ENCODE measurements at regions of chrX and their contacts with region 1.

Region 1: DNA sequence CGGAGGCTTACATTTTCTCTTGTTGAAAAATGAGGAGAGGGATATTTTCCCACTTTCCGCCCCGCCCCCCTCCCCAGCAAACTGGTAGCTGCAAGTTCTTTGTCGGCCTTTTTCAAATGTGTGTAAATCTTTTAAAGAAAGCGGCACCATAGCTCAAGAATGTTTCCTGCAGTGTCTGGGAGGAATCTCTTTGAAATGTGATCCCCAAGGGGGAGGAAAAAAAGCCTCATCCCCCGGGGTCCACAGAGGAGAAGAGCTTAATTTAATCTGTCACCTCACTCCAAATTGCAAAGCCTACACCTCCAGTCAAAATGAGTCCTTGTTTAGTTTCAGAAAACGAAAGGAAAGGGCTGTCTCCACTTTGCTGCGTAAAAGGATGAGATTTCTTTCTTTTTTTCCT is 34.8 kb downstream of the ASMT start:
- DNase-seq: no peak
- H3K4me3 ChIP-seq: no peak overlapping the region
- H3K27ac ChIP-seq: no peak overlapping the region
- H3K4me1 ChIP-seq: peaks cover 9% of the 10 kb centered on the region
- CTCF ChIP-seq: no peak

Region 2: DNA sequence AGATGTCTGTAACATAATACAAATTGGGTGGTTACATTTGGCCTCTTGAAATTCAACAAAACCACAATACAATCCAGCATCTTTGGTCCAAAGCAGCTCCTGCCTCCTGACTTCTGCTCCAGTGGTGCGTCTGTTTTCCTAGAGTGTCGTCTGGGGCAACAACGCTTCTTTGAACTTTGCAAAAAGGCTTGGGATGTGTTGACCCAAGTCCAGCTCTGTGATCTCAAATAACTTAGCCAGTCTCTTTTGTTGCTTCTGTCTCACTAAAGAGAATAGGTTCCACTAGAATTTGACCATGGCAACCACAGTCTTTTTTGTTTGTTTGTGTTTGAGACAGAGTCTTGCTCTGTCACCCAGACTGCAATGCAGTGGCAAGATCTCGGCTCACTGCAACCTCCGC is 527.1 kb after region 1 on chrX:
- CTCF ChIA-PET with region 1: no interaction called
- POLR2A ChIA-PET with region 1: no interaction called
- intact Hi-C with region 1: loop called (anchors 5 kb)
- DNase-seq: no peak
- H3K4me3 ChIP-seq: no peak overlapping the region
- H3K27ac ChIP-seq: no peak overlapping the region
- H3K4me1 ChIP-seq: peaks cover 47% of the 10 kb centered on the region
- CTCF ChIP-seq: no peak

Region 3: GRCh38 chrX:2589186-2590030 is 939.8 kb after region 1 on chrX:
- CTCF ChIA-PET with region 1: no interaction called
- POLR2A ChIA-PET with region 1: no interaction called
- intact Hi-C with region 1: loop called (anchors 5 kb)
- DNase-seq: no peak
- H3K4me3 ChIP-seq: no peak overlapping the region
- H3K27ac ChIP-seq: no peak overlapping the region
- H3K4me1 ChIP-seq: peaks cover 24% of the 10 kb centered on the region
- CTCF ChIP-seq: no peak